ENCODE measurements at regions of chr1 and their contacts with region 1.

Region 1: GRCh38 chr1:226526801-226527595 is 21.6 kb upstream of the STUM start:
- DNase-seq: peak; percentile 27
- H3K4me3 ChIP-seq: no peak overlapping the region
- H3K27ac ChIP-seq: no peak overlapping the region
- H3K4me1 ChIP-seq: no peaks in the 10 kb centered on the region
- H3K27me3 ChIP-seq: no peaks in the 10 kb centered on the region
- CTCF ChIP-seq: no peak

Region 2: DNA sequence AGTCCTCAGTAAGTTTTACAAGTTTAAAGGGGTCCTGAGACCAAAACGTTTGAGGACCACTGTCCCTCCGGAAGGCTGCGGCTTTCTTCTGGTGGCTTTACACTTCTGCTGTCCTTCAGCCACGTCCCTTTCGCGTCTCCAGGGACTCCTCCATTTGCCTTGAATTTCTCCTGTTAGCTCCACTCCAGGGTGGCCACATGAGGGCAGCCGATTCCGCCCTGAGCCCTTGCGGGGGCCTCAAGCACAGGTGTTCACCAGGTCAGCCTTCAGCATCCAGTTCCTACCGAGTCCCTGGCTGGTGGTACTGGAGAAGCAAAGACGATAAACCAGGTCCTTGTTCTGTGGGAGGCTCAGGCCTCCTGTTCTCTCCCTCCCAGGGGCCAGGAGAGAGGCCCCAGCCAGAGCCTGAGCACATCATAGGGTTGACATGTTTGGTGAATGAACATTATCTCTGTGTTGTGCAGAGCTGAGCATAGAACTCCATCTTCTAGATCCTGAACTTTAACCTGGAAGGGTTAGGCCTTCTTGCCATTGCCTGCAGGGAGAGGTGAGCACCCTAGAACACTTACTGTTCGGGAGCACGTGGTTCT is 385.7 kb after region 1 on chr1:
- CTCF ChIA-PET with region 1: no interaction called
- POLR2A ChIA-PET with region 1: interaction called, 19 read pairs
- intact Hi-C with region 1: no loop called
- DNase-seq: peak; percentile 25
- H3K4me3 ChIP-seq: no peak overlapping the region
- H3K27ac ChIP-seq: no peak overlapping the region
- H3K4me1 ChIP-seq: no peaks in the 10 kb centered on the region
- H3K27me3 ChIP-seq: no peaks in the 10 kb centered on the region
- CTCF ChIP-seq: peak; percentile 34